ENCODE measurements at regions of chr1 and their contacts with region 1.

Region 1: GRCh38 chr1:39490596-39491145 is 765 bp upstream of the BMP8A start:
- DNase-seq: peak in 1 of 2 donors; percentile 52
- ATAC-seq: no peak
- H3K4me3 ChIP-seq: no peak overlapping the region
- H3K4me3 Mint-ChIP-seq: peak overlapping the region; percentile 79
- H3K27ac ChIP-seq: no peak overlapping the region
- H3K27ac Mint-ChIP-seq: peak overlapping the region in 1 of 2 donors; percentile 68
- H3K4me1 ChIP-seq: peaks cover 12% of the 10 kb centered on the region
- H3K4me1 Mint-ChIP-seq: peaks cover 5 to 11% of the 10 kb centered on the region in 2 donors
- H3K27me3 ChIP-seq: peaks cover 3% of the 10 kb centered on the region
- H3K27me3 Mint-ChIP-seq: peaks cover 6 to 16% of the 10 kb centered on the region in 2 donors
- CTCF ChIP-seq: no peak

Region 2: DNA sequence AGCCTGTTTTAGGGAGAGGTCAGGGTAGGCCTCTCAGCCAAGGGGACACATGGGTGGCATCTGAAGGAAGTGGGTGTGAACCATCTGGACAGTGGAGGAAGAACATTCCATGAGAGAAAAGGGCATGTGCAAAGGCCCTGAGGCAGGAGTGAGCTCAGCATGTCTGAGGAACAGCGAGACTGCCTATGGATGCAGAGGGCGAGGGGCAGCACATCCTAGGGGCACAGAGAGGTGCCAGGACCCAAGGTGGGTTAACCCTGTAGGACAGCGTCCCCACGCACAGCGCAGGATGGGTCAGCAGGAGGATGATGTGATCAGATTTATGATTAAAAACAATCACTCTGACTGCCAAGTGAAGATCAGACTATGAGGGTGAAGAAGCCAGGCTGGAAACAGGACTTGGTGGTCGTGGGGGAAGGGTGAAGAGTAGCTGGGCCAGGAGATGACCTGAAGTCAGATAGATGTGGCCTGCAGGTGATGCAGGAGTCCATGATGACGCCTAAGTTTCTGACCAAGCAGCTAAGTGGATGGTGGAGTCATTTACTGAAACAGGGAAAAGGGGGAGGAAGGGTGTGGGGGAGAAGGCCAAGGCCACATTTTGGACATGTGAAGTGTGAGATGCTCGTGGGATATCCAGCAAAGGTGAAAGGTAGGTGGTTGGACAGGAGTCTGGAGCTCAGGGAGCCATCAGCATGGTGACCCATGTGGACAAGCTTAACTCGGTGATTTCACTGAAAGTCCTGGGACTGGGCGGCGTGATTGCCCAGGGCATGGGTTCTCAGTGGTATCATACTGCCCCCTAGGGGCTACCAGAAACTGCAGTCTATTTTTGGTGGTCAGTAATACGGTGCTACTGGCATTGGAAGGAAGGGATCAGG is 48.2 kb after region 1 on chr1:
- intact Hi-C with region 1: loop called (anchors 1 kb)
- DNase-seq: peak in 1 of 2 donors; percentile 72
- ATAC-seq: peak; percentile 85 to 95 (median 93)
- H3K4me3 ChIP-seq: no peak overlapping the region
- H3K4me3 Mint-ChIP-seq: no peak overlapping the region
- H3K27ac ChIP-seq: no peak overlapping the region
- H3K27ac Mint-ChIP-seq: no peak overlapping the region
- H3K4me1 ChIP-seq: peaks cover 12% of the 10 kb centered on the region
- H3K4me1 Mint-ChIP-seq: peaks cover 0 to 8% of the 10 kb centered on the region in 2 donors
- H3K27me3 ChIP-seq: no peaks in the 10 kb centered on the region
- H3K27me3 Mint-ChIP-seq: no peaks in the 10 kb centered on the region
- CTCF ChIP-seq: peak; percentile 88